Activated CD4-positive, alpha-beta memory T cell treated with anti-CD3 and anti-CD28 coated beads for 36 hours (primary cell): ENCODE measurements at regions of chr17 and their contacts with region 1.

Region 1: DNA sequence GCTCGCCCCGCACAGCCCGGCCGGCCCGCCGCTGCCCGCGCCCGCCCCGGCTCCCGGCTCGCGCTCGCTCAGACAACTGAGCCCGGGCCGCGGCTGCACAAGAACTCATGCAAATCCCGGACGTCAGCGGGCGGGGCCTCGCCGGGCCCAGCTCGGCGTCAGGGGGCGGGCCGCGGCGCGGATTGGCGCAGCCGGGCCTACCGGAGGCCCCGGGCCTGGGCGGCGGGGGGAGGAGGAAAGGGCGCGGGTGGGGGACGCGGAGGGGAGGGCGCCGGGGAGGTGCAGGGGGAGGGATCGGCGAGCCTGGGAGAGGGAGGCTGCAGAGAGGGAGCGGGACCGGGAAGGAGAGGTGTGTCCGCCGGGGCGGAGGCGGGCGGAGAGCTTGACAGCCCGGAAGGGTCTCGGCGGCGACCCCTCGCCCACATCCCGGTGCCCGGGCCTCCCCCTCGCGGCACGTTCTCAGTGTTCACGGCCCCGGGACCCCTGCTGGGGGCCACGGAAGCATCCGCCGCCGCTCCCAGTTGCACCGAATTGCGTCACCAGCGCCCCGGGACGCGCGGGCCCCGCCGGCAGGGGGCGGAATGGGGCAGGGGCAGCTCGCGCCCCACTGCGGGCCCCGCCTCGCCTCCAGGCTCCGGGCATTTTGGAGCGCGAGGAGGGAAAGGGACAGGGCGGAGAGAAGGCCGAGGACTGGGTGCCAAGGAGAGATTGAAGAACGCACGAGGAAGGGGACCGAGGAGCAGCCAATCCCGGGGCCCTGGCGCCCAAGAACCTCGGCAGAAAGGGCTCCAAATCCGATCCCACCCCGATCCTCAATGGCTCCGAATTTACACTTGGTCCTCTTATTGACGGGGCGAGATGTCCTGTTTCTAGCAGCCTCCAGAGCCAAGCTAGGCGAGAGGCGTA is at the start of gene CBX4:
- DNase-seq: peak; percentile 94
- H3K4me3 Mint-ChIP-seq: peak within 1 kb of the TSS; percentile 85
- H3K27ac Mint-ChIP-seq: peak within 1 kb of the TSS; percentile 78
- H3K4me1 Mint-ChIP-seq: peaks cover 46% of the 10 kb centered on the region
- H3K27me3 Mint-ChIP-seq: peaks cover 31% of the 10 kb centered on the region
- total RNA-seq, gene CBX4: 14.0 to 14.2 TPM

Region 2: DNA sequence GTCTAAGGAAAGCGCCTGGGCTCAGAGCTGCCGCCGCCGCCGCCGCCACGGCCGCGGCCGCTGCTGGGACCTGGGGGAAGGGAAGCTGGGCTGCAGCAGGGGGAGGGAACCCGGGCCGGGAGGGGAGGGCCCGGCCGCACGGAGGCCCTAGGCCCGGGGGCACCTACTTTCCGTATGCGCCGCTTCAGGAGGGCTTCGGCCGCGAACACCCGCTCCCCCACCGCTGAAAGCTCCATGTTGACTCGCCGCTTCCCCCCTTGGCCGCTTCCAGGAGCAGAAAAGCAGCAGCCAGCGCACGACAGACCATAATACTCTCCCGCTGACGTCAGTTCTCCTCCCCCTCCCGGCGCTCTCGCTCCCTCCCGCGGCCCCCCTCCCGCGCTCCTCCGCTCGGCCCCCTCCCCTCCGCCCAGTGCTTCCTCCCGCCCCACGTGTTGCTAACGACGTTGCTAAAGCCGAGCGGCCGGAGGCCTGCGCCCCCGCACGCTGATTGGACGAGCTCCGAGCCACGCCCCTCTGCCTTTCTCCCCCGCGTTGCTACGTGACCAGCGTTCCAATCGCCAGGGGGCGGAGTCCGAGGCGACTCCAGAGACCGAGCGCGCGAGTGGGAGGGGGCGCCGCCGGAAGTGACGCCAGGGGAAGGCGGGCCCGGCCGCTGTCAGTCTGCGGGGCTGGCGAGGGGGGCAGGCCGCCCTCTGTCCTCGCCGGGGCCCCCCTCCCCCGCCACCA is 42.7 kb before region 1 on chr17 and contains the start of gene CBX8:
- CTCF ChIA-PET with region 1: interaction called, 20 read pairs
- POLR2A ChIA-PET with region 1: interaction called, 23 read pairs
- intact Hi-C with region 1: loop called (anchors 1 kb)
- DNase-seq: peak; percentile 100
- H3K4me3 Mint-ChIP-seq: peak within 1 kb of the TSS; percentile 76
- H3K27ac Mint-ChIP-seq: peak within 1 kb of the TSS; percentile 69
- H3K4me1 Mint-ChIP-seq: peaks cover 29% of the 10 kb centered on the region
- H3K27me3 Mint-ChIP-seq: peaks cover 35% of the 10 kb centered on the region
- total RNA-seq, gene CBX8: 4.5 to 4.6 TPM

Region 3: GRCh38 chr17:79810130-79811010 is 29.2 kb before region 1 on chr17:
- CTCF ChIA-PET with region 1: interaction called, 49 read pairs
- POLR2A ChIA-PET with region 1: interaction called, 19 read pairs
- intact Hi-C with region 1: loop called (anchors 2 kb)
- DNase-seq: peak; percentile 87
- H3K4me3 Mint-ChIP-seq: peak overlapping the region; percentile 23
- H3K27ac Mint-ChIP-seq: no peak overlapping the region
- H3K4me1 Mint-ChIP-seq: peaks cover 33% of the 10 kb centered on the region
- H3K27me3 Mint-ChIP-seq: peaks cover 64% of the 10 kb centered on the region

Region 4: DNA sequence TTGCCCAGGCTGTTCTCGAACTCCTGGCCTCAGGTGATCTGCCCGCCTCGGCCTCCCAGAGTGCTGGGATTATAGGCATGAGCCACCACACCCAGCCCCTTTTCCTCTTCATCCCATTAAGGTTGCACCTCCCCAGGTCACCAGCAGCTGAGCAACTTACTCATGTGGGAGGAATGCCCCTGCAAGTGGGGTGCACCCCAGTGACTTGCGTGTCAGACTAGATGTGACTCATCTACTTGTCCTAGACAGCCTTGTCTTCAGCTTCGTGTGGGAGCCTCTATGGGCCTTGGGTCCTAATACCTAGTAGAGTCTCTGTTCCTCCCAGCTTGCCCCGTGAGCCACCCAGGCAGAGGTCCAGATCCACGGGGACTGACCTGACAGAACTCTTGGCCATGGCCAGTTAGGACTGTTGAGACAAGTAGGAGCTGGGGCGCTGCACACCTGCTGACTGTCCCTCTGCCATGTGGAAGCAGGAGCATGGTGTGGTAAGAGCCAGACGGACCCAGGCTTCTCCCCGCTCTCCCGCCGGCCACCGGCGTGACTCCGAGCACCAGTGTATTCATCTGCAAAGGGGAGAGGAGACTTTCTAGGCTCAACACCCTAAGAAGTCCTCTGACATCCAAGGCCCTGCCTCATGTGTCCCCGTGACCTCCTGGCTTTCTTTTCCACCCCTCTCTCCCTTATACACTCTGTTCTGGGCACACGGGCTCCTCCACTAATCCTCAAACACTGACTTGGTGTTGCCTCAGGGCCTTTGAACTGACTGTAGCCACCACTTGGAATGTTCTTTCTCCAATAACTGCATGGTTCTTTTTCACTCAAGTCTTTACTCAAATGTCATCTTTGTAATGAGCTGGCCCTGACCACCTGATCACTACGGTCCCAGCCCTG is 11.2 kb after region 1 on chr17:
- CTCF ChIA-PET with region 1: interaction called, 10 read pairs
- POLR2A ChIA-PET with region 1: interaction called, 3 read pairs
- intact Hi-C with region 1: no loop called
- DNase-seq: no peak
- H3K4me3 Mint-ChIP-seq: no peak overlapping the region
- H3K27ac Mint-ChIP-seq: no peak overlapping the region
- H3K4me1 Mint-ChIP-seq: peaks cover 3% of the 10 kb centered on the region
- H3K27me3 Mint-ChIP-seq: peaks cover 8% of the 10 kb centered on the region

Region 5: GRCh38 chr17:79997011-79997660 is 157.5 kb after region 1 on chr17:
- CTCF ChIA-PET with region 1: interaction called, 3 read pairs
- POLR2A ChIA-PET with region 1: interaction called, 3 read pairs
- intact Hi-C with region 1: loop called (anchors 2 kb)
- DNase-seq: peak; percentile 88
- H3K4me3 Mint-ChIP-seq: peak overlapping the region; percentile 48
- H3K27ac Mint-ChIP-seq: peak overlapping the region; percentile 90
- H3K4me1 Mint-ChIP-seq: peaks cover 42% of the 10 kb centered on the region
- H3K27me3 Mint-ChIP-seq: no peaks in the 10 kb centered on the region